Mammary epithelial cell (primary cell): ENCODE measurements at regions of chr3 and their contacts with region 1.

Region 1: GRCh38 chr3:38843898-38844297 is 27.9 kb upstream of the SCN10A start:
- DNase-seq: peak; percentile 45
- H3K4me3 ChIP-seq: no peak overlapping the region
- H3K27ac ChIP-seq: no peak overlapping the region
- H3K4me1 ChIP-seq: no peaks in the 10 kb centered on the region
- H3K27me3 ChIP-seq: no peaks in the 10 kb centered on the region
- CTCF ChIP-seq: peak; percentile 15 to 60

Region 2: DNA sequence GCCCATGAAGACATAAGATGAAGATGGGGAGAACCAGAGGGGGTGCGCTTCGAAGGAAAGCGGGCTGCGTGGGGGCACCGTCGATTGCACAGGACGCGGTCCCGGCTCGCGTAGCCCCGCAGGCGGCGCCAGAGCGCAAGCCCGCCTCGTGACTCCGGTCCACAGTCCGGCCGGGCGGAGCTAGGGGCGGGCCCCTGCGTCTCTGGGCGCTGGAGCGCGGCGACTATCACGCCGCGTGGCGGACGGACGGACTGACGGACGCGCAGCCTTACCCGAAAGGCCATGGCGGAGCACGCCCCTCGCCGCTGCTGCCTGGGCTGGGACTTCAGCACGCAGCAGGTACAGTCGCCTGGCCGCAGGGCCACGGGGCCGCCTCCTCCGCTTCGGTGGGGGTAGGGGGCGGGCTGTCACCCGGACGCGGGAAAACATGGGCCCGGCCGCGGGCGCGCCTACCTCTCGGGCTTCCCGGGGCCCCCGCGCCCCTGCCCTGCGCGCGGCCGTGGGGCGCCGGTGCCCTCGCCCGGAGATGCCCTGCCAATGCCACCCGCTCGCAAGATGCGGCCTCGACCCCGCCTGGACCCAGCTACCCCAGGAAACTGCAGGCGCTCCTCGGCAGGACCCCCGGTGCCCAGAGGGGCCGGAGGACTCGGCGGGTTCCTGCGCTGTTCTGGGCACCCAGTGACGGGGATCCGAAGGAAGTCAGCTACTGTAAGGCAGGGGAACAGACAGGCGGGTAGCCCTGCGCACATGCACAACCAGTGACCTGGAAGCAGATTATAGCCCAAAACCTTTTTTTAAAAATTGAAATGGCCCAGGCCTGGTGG is 497.1 kb before region 1 on chr3 and contains the start of gene XYLB:
- CTCF ChIA-PET with region 1: no interaction called
- dilution Hi-C with region 1: no loop called
- in situ Hi-C with region 1: no loop called
- intact Hi-C with region 1: no loop called
- DNase-seq: peak; percentile 75
- H3K4me3 ChIP-seq: peak within 1 kb of the TSS; percentile 76 to 91 (median 90)
- H3K27ac ChIP-seq: no peak within 1 kb of the TSS
- H3K4me1 ChIP-seq: peaks cover 4% of the 10 kb centered on the region
- H3K27me3 ChIP-seq: no peaks in the 10 kb centered on the region
- CTCF ChIP-seq: peak; percentile 59 to 88
- total RNA-seq, gene XYLB: 3.0 to 4.5 TPM

Region 3: GRCh38 chr3:38496131-38496910 is 347.6 kb before region 1 on chr3 and contains the start of gene EXOG:
- CTCF ChIA-PET with region 1: no interaction called
- dilution Hi-C with region 1: no loop called
- in situ Hi-C with region 1: no loop called
- intact Hi-C with region 1: loop called (anchors 1 kb)
- DNase-seq: peak; percentile 85
- H3K4me3 ChIP-seq: peak within 1 kb of the TSS; percentile 79 to 89 (median 81)
- H3K27ac ChIP-seq: peak within 1 kb of the TSS; percentile 63
- H3K4me1 ChIP-seq: no peaks in the 10 kb centered on the region
- H3K27me3 ChIP-seq: no peaks in the 10 kb centered on the region
- CTCF ChIP-seq: peak; percentile 49 to 90
- total RNA-seq, gene EXOG: 8.0 to 19.9 TPM

Region 4: GRCh38 chr3:38528457-38528856 is 315.4 kb before region 1 on chr3:
- CTCF ChIA-PET with region 1: no interaction called
- dilution Hi-C with region 1: no loop called
- in situ Hi-C with region 1: loop called in 1 of 2 experiments (anchors 25 kb)
- intact Hi-C with region 1: loop called (anchors 5 kb)
- DNase-seq: no peak
- H3K4me3 ChIP-seq: no peak overlapping the region
- H3K27ac ChIP-seq: no peak overlapping the region
- H3K4me1 ChIP-seq: peaks cover 9% of the 10 kb centered on the region
- H3K27me3 ChIP-seq: no peaks in the 10 kb centered on the region
- CTCF ChIP-seq: no peak

Region 5: DNA sequence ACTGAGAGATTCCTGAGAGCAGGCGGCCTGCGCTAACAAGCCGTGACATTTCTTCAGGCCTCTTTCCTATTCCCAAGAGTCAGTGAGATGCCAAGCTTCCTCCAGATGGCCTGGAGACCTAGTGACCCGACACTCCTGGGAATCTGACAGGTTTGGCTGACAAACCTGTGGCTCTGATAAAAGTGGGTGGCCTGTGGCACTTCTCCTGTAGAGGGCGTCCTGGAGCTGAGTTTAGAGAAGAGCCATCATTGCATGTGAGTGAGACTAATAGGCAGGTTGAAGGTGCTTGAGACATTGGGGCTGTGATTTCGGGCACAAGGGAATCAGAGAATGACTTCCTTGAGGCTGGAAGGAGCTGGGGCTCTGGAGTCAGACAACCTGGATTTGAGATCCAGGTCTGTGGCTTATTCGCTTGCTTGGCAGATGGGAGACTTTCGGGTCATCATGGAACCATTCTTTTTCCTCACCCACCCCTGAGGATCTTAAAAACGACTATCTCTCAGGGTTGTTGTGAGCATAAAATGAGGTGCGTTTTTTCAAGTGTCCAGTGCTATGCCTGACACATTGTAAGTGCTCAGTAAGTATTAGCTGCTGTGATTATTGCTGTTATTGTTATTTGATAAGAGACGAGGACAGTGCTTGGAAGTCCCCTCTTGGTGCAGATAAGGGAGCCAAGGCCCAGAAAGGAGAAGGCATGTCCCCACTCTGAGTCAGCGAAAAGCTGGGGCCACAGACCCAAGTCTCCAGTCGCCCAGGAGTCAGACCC is 105.1 kb before region 1 on chr3:
- CTCF ChIA-PET with region 1: no interaction called
- dilution Hi-C with region 1: no loop called
- in situ Hi-C with region 1: no loop called
- intact Hi-C with region 1: loop called (anchors 1 kb)
- DNase-seq: peak; percentile 32
- H3K4me3 ChIP-seq: no peak overlapping the region
- H3K27ac ChIP-seq: no peak overlapping the region
- H3K4me1 ChIP-seq: no peaks in the 10 kb centered on the region
- H3K27me3 ChIP-seq: no peaks in the 10 kb centered on the region
- CTCF ChIP-seq: peak; percentile 84 to 87

Region 6: DNA sequence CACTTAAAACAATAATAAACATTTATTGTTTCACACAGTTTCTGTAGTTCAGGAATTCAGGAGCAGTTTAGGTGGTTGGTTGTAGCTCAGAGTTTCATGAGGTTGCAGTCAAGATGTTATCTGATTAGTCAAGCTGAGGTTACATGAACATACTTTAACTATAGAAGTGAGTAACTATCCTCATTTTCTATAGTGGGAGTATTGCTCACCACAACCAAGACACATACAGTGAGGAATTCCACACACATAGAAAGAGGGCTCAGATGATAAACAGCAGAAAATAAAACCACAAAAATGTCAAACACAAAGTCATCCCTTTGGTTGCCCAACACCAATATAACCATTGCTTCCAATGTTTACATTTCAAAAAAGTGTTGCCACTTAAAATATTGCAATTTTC is 194.3 kb after region 1 on chr3:
- CTCF ChIA-PET with region 1: no interaction called
- dilution Hi-C with region 1: no loop called
- in situ Hi-C with region 1: no loop called
- intact Hi-C with region 1: loop called (anchors 10 kb)
- DNase-seq: peak; percentile 93
- H3K4me3 ChIP-seq: no peak overlapping the region
- H3K27ac ChIP-seq: peak overlapping the region; percentile 40
- H3K4me1 ChIP-seq: peaks cover 13% of the 10 kb centered on the region
- H3K27me3 ChIP-seq: no peaks in the 10 kb centered on the region
- CTCF ChIP-seq: no peak